ENCODE measurements at regions of chr11 and their contacts with region 1.

Region 1: GRCh38 chr11:77187776-77188632 is 60.0 kb downstream of the MYO7A start:
- DNase-seq: peak; percentile 53
- H3K4me3 Mint-ChIP-seq: no peak overlapping the region
- H3K27ac Mint-ChIP-seq: no peak overlapping the region
- H3K4me1 Mint-ChIP-seq: no peaks in the 10 kb centered on the region
- H3K27me3 Mint-ChIP-seq: no peaks in the 10 kb centered on the region

Region 2: GRCh38 chr11:77127232-77127911 is 60.6 kb before region 1 on chr11:
- intact Hi-C with region 1: loop called (anchors 1 kb)
- DNase-seq: peak; percentile 31
- H3K4me3 Mint-ChIP-seq: peak overlapping the region; percentile 49
- H3K27ac Mint-ChIP-seq: no peak overlapping the region
- H3K4me1 Mint-ChIP-seq: no peaks in the 10 kb centered on the region
- H3K27me3 Mint-ChIP-seq: peaks cover 5% of the 10 kb centered on the region

Region 3: GRCh38 chr11:77547863-77548551 is 360.0 kb after region 1 on chr11:
- intact Hi-C with region 1: loop called (anchors 5 kb)
- DNase-seq: no peak
- H3K4me3 Mint-ChIP-seq: no peak overlapping the region
- H3K27ac Mint-ChIP-seq: no peak overlapping the region
- H3K4me1 Mint-ChIP-seq: peaks cover 6% of the 10 kb centered on the region
- H3K27me3 Mint-ChIP-seq: no peaks in the 10 kb centered on the region

Measured in activated T-helper 2 cell treated with anti-CD3 and anti-CD28 coated beads, Interferon-gamma antibody, Interleukin-2, Interleukin-4, amounts not matched to agents 10 μg/mL and 5 μg/mL and 100 μg/mL, durations not matched to agents 14 hours and 24 hours and 36 hours (primary cell).